ENCODE measurements at regions of chr18 and their contacts with region 1.

Region 1: GRCh38 chr18:49970319-49970718 is 157.0 kb upstream of the ACAA2 start:
- DNase-seq: no peak
- H3K4me3 ChIP-seq: no peak overlapping the region
- CTCF ChIP-seq: no peak

Region 2: DNA sequence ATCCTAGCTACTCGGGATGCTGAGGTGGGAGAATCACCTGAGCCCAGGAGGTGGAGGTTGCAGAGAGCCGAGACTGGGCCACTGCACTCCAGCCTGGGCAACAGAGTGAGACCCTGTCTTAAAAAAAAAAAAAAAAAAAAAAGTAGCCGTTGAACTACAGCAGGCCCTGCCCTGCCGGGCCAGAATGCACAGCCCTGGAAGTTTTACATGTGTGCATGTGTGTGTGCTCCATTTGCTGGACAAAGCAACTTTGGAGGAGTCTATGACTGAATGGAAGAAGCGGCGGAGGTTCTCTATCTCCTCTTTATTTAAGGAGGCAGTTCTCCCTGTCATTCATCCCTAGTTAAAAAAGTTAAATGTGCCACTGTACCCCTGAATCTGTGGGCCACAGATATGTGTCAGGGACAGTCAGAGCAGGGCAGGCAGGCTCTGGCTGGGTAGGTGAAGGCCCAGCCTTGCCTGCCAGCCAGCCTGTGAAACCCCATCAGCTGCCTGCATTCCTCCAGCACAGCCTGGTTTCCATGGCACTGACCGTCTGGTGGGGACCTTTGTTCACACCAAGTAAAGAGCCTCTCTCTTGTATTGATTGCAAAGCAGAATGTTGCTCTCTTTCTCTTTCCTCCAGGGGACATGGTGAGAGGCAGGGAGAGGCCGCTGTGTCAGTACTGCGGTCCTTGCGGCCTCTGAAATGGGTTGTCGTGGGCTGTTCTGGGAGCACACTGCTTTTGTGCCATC is 397.5 kb before region 1 on chr18:
- in situ Hi-C with region 1: no loop called
- DNase-seq: no peak
- H3K4me3 ChIP-seq: no peak overlapping the region
- CTCF ChIP-seq: no peak

Region 3: DNA sequence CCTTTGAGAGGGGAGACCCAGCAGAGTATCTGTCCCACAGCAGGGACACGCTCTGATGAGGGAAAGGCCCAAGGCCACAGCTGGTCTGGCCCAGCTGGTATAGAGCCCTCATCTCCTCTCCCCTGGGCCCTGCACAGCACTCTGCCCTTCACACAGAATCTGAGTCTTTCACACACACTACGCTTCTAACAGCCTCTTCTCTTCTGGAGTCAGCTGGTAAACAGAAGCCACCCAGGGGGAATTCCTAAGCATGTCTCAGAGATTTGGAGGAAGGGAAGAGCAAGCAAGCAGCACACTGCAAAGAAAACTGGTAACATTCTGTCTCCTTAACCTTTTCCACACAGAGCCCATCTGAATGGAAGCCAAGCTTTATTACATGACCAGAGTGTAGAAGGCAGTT is 35.9 kb before region 1 on chr18:
- in situ Hi-C with region 1: loop called (anchors 5 kb)
- DNase-seq: no peak
- H3K4me3 ChIP-seq: no peak overlapping the region
- CTCF ChIP-seq: no peak

Region 4: DNA sequence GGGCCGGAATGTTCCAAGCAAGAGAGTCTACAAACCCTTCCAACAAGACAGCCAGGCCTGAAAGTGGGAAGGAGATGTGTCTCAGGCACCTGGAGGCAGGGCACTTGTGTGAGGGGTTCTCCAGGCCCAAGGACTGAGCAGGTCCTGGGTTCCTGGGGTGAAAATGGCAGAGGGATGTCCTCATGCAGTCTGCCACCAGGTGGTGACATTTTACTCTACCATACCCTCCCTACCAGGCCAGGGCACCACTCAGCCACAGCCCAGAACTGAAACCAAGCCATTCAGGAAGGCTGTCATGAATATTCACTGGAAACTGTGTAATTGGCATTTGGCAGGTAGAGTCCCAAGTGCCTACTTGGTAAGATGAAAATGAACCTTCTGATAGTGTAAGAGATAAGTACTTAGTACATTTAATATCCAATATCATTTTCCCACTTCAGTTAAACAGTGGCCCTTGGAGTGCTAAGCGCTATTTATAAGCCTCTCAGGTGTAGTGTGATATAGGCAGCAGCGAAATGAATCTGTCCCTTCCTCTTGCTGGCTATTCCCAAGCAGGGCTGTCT is 39.5 kb after region 1 on chr18:
- in situ Hi-C with region 1: loop called (anchors 5 kb)
- DNase-seq: no peak
- H3K4me3 ChIP-seq: no peak overlapping the region
- CTCF ChIP-seq: peak; percentile 41

Region 5: DNA sequence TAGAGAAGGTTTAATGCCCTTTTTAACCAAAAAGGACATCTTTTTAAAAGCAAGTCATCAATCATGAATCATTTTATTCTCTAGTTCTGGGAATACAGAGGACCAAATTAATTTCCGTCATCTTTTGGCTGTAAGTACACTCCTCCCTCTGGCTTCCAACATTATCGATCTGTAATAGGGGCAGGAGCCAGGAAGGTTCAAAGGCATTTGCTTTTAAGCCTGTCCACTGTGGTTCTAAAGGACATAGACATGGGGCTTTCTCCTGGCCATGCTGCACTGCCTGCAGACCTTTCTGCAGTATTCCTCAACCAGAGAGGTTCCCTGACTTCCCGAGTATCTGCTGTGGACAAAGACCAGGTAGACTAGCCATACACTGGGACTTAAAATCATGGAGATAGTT is 54.1 kb after region 1 on chr18:
- in situ Hi-C with region 1: no loop called
- DNase-seq: no peak
- H3K4me3 ChIP-seq: no peak overlapping the region
- CTCF ChIP-seq: no peak

Measured in astrocyte of the cerebellum (primary cell).